ENCODE measurements at regions of chr7 and their contacts with region 1.

Region 1: DNA sequence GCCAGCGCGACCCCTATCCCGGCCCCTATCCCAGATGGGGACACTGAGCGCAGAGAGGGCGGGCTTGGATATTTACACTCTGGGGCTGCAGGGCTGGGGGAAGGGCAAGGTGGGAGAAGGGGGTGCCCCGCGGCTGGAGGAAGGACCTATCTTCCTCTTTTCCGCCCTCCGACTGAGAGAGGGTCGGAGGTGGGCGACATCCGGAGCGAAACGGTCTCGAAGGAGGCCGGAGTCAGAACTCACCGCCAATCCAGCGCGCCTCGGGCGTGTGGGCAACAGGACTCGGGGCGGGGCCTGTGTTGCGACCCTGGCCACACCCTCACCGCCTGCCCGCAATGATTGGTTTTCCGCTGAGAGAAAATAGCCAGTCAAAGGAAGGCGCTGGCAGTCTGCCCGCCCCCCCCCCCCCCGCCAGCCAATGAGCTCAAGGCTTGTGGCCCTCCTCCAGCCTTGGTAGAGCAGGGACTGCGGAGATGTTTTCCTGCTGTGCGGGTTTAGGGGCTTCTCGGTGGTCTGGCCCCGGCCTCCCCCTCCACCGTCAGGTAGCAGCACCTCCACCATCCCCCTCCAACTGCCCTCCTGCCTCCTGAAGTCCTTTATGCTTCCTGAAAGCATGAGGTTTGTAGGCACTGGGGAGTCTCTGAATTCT is at the start of gene METTL27:
- DNase-seq: peak; percentile 84 to 91 (median 88)
- H3K4me3 ChIP-seq: peak within 1 kb of the TSS; percentile 47 to 72
- H3K4me3 Mint-ChIP-seq: peak within 1 kb of the TSS; percentile 86 to 91 (median 88)
- H3K27ac ChIP-seq: peak within 1 kb of the TSS; percentile 22
- H3K27ac Mint-ChIP-seq: peak within 1 kb of the TSS in 5 of 7 donors; percentile 57 to 86 (median 64)
- H3K4me1 ChIP-seq: peaks cover 6% of the 10 kb centered on the region
- H3K4me1 Mint-ChIP-seq: peaks cover 0 to 16% (median 8%) of the 10 kb centered on the region in 4 donors
- H3K27me3 ChIP-seq: no peaks in the 10 kb centered on the region
- H3K27me3 Mint-ChIP-seq: peaks cover 0 to 2% of the 10 kb centered on the region in 2 donors
- total RNA-seq, gene METTL27: 6.1 to 7.6 TPM

Region 2: DNA sequence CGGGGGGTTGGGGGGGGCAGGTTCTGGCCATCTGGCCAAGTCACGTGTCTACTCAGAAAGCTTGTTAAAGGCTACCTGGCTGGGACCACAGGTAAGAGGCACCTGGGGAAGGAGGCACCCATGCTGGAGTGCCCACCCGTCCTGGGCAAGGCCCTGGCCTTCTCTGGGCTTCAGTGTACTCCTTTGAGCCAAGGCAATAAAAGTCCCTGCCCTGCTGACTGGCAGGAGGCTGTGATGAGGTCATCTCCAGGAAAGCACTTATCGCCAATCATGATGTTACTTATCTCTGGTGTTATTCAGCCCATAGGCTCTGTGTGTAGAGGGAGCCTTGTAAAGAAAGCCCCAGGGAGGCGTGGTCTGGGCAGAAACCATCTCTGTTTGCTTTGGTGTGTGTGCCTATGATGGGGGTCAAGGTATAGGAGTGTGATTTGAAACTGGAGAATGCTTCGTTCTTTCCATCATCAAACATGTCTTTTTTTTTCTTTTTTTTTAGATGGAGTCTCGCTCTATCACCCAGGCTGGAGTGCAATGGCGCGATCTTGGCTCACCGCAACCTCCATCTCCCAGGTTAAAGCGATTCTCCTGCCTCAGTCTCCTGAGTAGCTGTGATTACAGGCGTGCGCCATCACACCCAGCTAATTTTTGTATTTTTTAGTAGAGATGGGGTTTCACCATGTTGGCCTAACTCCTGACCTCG is 14.1 kb before region 1 on chr7:
- CTCF ChIA-PET with region 1: interaction called, 4 read pairs
- POLR2A ChIA-PET with region 1: interaction called, 12 read pairs
- intact Hi-C with region 1: no loop called
- DNase-seq: peak in 1 of 5 donors; percentile 22
- H3K4me3 ChIP-seq: no peak overlapping the region
- H3K4me3 Mint-ChIP-seq: peak overlapping the region in 6 of 8 donors; percentile 1 to 65 (median 52)
- H3K27ac ChIP-seq: no peak overlapping the region
- H3K27ac Mint-ChIP-seq: peak overlapping the region in 3 of 7 donors; percentile 28 to 83 (median 45)
- H3K4me1 ChIP-seq: peaks cover 30% of the 10 kb centered on the region
- H3K4me1 Mint-ChIP-seq: peaks cover 22 to 56% (median 29%) of the 10 kb centered on the region in 4 donors
- H3K27me3 ChIP-seq: no peaks in the 10 kb centered on the region
- H3K27me3 Mint-ChIP-seq: peaks cover 2 to 8% of the 10 kb centered on the region in 2 donors

Region 3: GRCh38 chr7:73885975-73886798 is 43.8 kb after region 1 on chr7:
- CTCF ChIA-PET with region 1: no interaction called
- POLR2A ChIA-PET with region 1: no interaction called
- intact Hi-C with region 1: no loop called
- DNase-seq: no peak
- H3K4me3 ChIP-seq: no peak overlapping the region
- H3K4me3 Mint-ChIP-seq: no peak overlapping the region
- H3K27ac ChIP-seq: no peak overlapping the region
- H3K27ac Mint-ChIP-seq: no peak overlapping the region
- H3K4me1 ChIP-seq: no peaks in the 10 kb centered on the region
- H3K4me1 Mint-ChIP-seq: peaks cover 0 to 2% (median 0%) of the 10 kb centered on the region in 4 donors
- H3K27me3 ChIP-seq: peaks cover 4% of the 10 kb centered on the region
- H3K27me3 Mint-ChIP-seq: peaks cover 11 to 23% of the 10 kb centered on the region in 2 donors

Measured in CD4-positive, alpha-beta memory T cell (primary cell).